Endothelial cell of umbilical vein (primary cell): ENCODE measurements at regions of chr2 and their contacts with region 1.

Region 1: GRCh38 chr2:27723372-27724144 is 48.0 kb upstream of the MRPL33 start:
- DNase-seq: peak; percentile 68
- H3K4me3 ChIP-seq: no peak overlapping the region
- H3K27ac ChIP-seq: no peak overlapping the region
- H3K4me1 ChIP-seq: peaks cover 14% of the 10 kb centered on the region
- H3K27me3 ChIP-seq: no peaks in the 10 kb centered on the region
- CTCF ChIP-seq: peak; percentile 78 to 90
- POLR2A ChIP-seq: no peak

Region 2: DNA sequence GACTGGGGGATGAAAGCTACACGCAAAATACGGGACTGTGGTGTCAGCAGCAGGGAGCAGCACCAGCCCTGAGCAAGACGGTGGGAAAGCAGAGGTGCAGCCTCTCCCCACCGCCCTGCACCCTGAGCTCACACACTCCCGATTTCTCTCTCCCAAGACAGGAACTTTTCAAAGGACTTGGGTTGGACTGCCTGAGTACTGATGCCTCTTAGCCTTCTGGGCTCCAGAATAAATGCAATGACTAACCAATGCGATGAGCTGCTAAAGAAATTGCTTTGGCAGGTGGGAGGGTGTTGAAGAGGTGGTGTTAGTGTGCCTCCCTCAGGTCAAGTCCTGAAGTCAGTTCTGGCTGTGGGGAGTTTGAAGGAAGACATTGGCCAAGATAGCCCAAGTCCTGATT is 431.7 kb before region 1 on chr2:
- CTCF ChIA-PET with region 1: no interaction called
- POLR2A ChIA-PET with region 1: no interaction called
- dilution Hi-C with region 1: no loop called
- intact Hi-C with region 1: no loop called
- DNase-seq: no peak
- H3K4me3 ChIP-seq: no peak overlapping the region
- H3K27ac ChIP-seq: no peak overlapping the region
- H3K4me1 ChIP-seq: peaks cover 44% of the 10 kb centered on the region
- H3K27me3 ChIP-seq: no peaks in the 10 kb centered on the region
- CTCF ChIP-seq: peak in 1 of 2 donors; percentile 6
- POLR2A ChIP-seq: no peak

Region 3: DNA sequence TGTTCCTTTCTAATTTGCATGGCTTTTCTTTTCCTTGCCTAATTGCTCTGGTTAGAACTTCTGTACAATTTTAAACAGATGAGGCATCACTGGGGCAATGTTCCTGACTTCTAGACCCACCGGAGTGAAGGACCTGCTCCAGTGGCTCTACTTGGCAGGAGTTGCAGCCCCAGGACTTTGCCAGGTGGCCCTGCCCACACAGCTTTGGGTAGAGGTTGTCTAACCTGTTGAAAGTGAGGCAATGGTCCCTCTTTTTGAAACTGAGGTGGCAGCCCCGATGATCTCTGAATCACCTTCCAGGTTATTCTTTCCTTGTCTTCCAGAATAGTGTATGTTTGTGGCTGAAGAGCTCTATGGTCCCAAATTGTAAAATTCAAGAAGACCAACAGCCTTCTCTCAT is 170.6 kb before region 1 on chr2:
- CTCF ChIA-PET with region 1: no interaction called
- POLR2A ChIA-PET with region 1: no interaction called
- dilution Hi-C with region 1: no loop called
- intact Hi-C with region 1: no loop called
- DNase-seq: no peak
- H3K4me3 ChIP-seq: no peak overlapping the region
- H3K27ac ChIP-seq: no peak overlapping the region
- H3K4me1 ChIP-seq: no peaks in the 10 kb centered on the region
- H3K27me3 ChIP-seq: peaks cover 0 to 1% of the 10 kb centered on the region in 2 experiments
- CTCF ChIP-seq: no peak
- POLR2A ChIP-seq: no peak

Region 4: DNA sequence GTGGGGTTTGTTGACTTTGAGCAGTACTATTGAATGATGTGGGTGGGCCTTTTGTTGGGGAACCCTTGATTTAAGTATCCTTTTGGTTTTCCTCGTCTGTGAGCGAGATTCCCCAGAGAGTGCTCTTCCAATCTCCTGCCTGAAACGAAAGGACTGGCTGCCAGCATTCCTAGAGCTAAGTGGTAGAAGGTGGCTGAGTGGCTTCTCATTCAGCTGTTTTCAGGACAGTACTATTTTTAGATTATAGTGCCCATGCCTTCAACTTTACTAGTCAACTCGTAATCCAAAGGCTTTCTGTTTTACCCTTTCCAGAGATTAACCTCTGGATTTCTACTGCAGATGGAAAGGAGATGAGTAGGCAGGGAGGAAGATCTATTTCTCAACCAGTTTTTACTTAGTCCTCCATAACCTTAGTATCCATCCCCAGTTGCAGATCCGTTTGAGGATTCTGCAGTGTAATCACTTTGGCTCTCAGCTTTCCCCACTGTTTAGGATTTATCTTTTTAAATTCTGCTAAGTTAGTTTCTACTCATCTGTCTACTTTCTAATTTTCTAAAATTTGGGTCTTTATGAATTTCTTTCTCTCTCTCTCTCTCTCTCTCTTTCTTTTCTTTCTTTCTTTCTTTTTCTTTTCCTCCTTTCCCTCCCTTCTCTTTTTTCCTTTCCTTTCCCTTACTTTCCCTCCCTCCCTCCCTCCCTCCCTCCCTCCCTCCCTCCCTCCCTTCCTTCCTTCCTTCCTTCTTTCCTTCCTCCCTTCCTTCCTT is 50.7 kb before region 1 on chr2:
- CTCF ChIA-PET with region 1: no interaction called
- POLR2A ChIA-PET with region 1: no interaction called
- dilution Hi-C with region 1: no loop called
- intact Hi-C with region 1: no loop called
- DNase-seq: no peak
- H3K4me3 ChIP-seq: no peak overlapping the region
- H3K27ac ChIP-seq: no peak overlapping the region
- H3K4me1 ChIP-seq: peaks cover under 1% of the 10 kb centered on the region
- H3K27me3 ChIP-seq: no peaks in the 10 kb centered on the region
- CTCF ChIP-seq: no peak
- POLR2A ChIP-seq: no peak

Region 5: GRCh38 chr2:27735263-27735953 is 11.8 kb after region 1 on chr2:
- CTCF ChIA-PET with region 1: interaction called, 48 read pairs
- POLR2A ChIA-PET with region 1: no interaction called
- dilution Hi-C with region 1: no loop called
- intact Hi-C with region 1: no loop called
- DNase-seq: peak; percentile 46
- H3K4me3 ChIP-seq: peak overlapping the region in 2 of 3 experiments; percentile 7 to 20
- H3K27ac ChIP-seq: peak overlapping the region; percentile 35
- H3K4me1 ChIP-seq: peaks cover 31% of the 10 kb centered on the region
- H3K27me3 ChIP-seq: no peaks in the 10 kb centered on the region
- CTCF ChIP-seq: no peak
- POLR2A ChIP-seq: peak; percentile 34

Region 6: GRCh38 chr2:27741673-27742072 is 18.1 kb after region 1 on chr2:
- CTCF ChIA-PET with region 1: interaction called, 48 read pairs
- POLR2A ChIA-PET with region 1: no interaction called
- dilution Hi-C with region 1: no loop called
- intact Hi-C with region 1: no loop called
- DNase-seq: no peak
- H3K4me3 ChIP-seq: no peak overlapping the region
- H3K27ac ChIP-seq: no peak overlapping the region
- H3K4me1 ChIP-seq: peaks cover 15% of the 10 kb centered on the region
- H3K27me3 ChIP-seq: no peaks in the 10 kb centered on the region
- CTCF ChIP-seq: no peak
- POLR2A ChIP-seq: no peak

Region 7: GRCh38 chr2:27754138-27754588 is 30.6 kb after region 1 on chr2:
- CTCF ChIA-PET with region 1: interaction called, 17 read pairs
- POLR2A ChIA-PET with region 1: no interaction called
- dilution Hi-C with region 1: no loop called
- intact Hi-C with region 1: loop called (anchors 1 kb)
- DNase-seq: peak; percentile 81
- H3K4me3 ChIP-seq: no peak overlapping the region
- H3K27ac ChIP-seq: no peak overlapping the region
- H3K4me1 ChIP-seq: no peaks in the 10 kb centered on the region
- H3K27me3 ChIP-seq: no peaks in the 10 kb centered on the region
- CTCF ChIP-seq: peak; percentile 94 to 97
- POLR2A ChIP-seq: no peak